MCF 10A (cell line): ENCODE measurements at regions of chr1 and their contacts with region 1.

Region 1: GRCh38 chr1:74699331-74699730 is 25.7 kb upstream of the ERICH3 start:
- DNase-seq: no peak
- H3K4me3 Mint-ChIP-seq: no peak overlapping the region
- H3K27ac Mint-ChIP-seq: no peak overlapping the region
- H3K4me1 Mint-ChIP-seq: no peaks in the 10 kb centered on the region
- H3K27me3 Mint-ChIP-seq: no peaks in the 10 kb centered on the region
- CTCF ChIP-seq: no peak

Region 2: GRCh38 chr1:74654708-74655107 is 44.6 kb before region 1 on chr1:
- CTCF ChIA-PET with region 1: no interaction called
- POLR2A ChIA-PET with region 1: no interaction called
- intact Hi-C with region 1: loop called (anchors 1 kb)
- DNase-seq: no peak
- H3K4me3 Mint-ChIP-seq: no peak overlapping the region
- H3K27ac Mint-ChIP-seq: no peak overlapping the region
- H3K4me1 Mint-ChIP-seq: peaks cover 7% of the 10 kb centered on the region
- H3K27me3 Mint-ChIP-seq: no peaks in the 10 kb centered on the region
- CTCF ChIP-seq: no peak

Region 3: DNA sequence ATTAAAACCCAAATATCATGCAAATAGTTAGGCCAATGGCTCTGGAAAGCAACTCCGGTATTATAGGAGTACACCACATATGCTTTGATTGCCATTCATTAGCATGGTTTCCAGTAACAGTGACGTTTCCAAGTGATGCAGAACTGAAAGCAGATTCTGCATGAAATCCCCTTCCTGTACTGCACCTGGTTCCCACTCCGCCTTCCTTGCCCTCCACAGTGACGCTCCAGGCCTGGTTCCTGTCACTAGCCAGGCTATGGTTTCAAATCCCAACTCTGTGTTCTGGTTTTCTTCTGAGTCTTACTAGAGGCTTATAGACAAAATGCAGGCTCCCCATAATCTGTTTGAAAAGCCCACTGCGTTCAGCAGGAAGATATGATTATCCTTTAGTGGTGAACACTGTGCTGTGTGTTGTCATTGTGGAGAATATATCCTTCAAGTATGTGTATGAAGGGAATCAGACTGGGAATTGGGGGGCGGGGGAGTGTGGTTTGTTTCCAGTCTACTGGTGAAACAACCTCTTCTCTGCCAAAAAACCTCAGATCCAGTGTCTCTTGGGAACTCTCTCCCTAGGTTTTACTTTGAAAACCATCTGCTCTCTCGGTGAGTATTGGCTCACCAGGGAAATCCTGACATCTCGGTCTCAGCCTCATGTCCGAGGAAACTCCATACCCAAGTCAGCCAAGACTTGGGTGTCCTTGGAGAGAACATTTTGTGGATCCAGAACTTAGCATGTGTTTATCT is 112.3 kb after region 1 on chr1:
- CTCF ChIA-PET with region 1: no interaction called
- POLR2A ChIA-PET with region 1: no interaction called
- intact Hi-C with region 1: no loop called
- DNase-seq: no peak
- H3K4me3 Mint-ChIP-seq: no peak overlapping the region
- H3K27ac Mint-ChIP-seq: no peak overlapping the region
- H3K4me1 Mint-ChIP-seq: no peaks in the 10 kb centered on the region
- H3K27me3 Mint-ChIP-seq: peaks cover 21% of the 10 kb centered on the region
- CTCF ChIP-seq: no peak